ENCODE measurements at regions of chr12 and their contacts with region 1.

Region 1: GRCh38 chr12:15001733-15002382 is 29.0 kb downstream of the PDE6H start:
- DNase-seq: peak in 4 of 5 donors; percentile 23 to 62 (median 56)
- ATAC-seq: peak; percentile 67 to 91 (median 78)
- H3K4me3 ChIP-seq: no peak overlapping the region
- H3K27ac ChIP-seq: peak overlapping the region in 5 of 12 donors; percentile 12 to 76 (median 15)
- H3K4me1 ChIP-seq: peaks cover 0 to 13% (median 7%) of the 10 kb centered on the region in 12 donors
- H3K27me3 ChIP-seq: peaks cover 0 to 7% (median 0%) of the 10 kb centered on the region in 9 donors
- CTCF ChIP-seq: peak in 1 of 12 donors; percentile 12
- POLR2A ChIP-seq: no peak

Region 2: DNA sequence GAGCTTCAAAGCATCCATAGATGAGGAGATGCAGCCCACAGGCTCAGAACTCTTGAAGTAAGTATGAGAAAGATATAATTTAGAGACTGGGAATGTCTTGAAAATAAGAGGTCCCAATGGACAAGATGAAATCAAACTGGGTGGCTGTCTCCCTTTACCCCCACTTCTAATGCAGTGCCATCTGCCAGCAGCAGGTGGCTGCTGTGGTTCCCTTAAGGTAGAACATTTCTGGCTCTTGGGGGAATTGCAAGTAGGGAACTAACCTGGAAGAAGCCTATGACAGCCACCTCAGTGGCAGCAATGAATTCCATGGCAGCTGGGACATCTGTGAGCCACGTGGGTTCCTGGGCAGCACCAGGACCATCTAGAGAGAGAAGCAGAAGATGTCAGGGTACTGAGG is 64.2 kb before region 1 on chr12:
- intact Hi-C with region 1: no loop called
- DNase-seq: no peak
- ATAC-seq: no peak
- H3K4me3 ChIP-seq: no peak overlapping the region
- H3K27ac ChIP-seq: no peak overlapping the region
- H3K4me1 ChIP-seq: peaks cover 0 to 4% (median 0%) of the 10 kb centered on the region in 12 donors
- H3K27me3 ChIP-seq: no peaks in the 10 kb centered on the region
- CTCF ChIP-seq: no peak
- POLR2A ChIP-seq: no peak

Region 3: DNA sequence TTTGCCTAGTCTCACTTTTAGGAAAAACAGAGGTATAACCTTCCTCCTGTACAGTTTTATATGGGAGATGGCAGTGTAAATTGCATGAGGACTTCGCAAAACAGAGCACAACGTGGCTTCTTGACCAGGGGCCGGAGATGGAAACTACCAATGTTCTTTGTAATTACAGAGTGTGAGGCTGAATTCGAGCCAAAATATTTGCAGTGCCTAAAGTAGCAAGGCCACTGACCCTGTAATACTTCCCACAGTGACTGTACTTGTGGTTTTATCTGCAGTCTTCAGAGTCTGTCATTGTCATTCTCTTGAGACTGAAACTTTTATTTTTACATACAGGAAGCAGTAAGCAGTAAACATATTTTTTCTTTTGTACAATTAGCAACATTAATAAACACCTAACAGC is 120.5 kb after region 1 on chr12:
- intact Hi-C with region 1: loop called in 1 of 10 experiments (anchors 10 kb)
- DNase-seq: peak in 1 of 5 donors; percentile 33
- ATAC-seq: peak; percentile 49 to 69 (median 60)
- H3K4me3 ChIP-seq: no peak overlapping the region
- H3K27ac ChIP-seq: peak overlapping the region in 5 of 12 donors; percentile 1 to 33 (median 23)
- H3K4me1 ChIP-seq: peaks cover 0 to 8% (median 0%) of the 10 kb centered on the region in 12 donors
- H3K27me3 ChIP-seq: no peaks in the 10 kb centered on the region
- CTCF ChIP-seq: no peak
- POLR2A ChIP-seq: no peak

Region 4: GRCh38 chr12:15216036-15216794 is 214.4 kb after region 1 on chr12:
- intact Hi-C with region 1: loop called in 7 of 10 experiments (anchors 5 to 10 kb)
- DNase-seq: no peak
- ATAC-seq: no peak
- H3K4me3 ChIP-seq: no peak overlapping the region
- H3K27ac ChIP-seq: peak overlapping the region in 6 of 12 donors; percentile 14 to 85 (median 60)
- H3K4me1 ChIP-seq: peaks cover 0 to 17% (median 3%) of the 10 kb centered on the region in 12 donors
- H3K27me3 ChIP-seq: peaks cover 0 to 13% (median 0%) of the 10 kb centered on the region in 9 donors
- CTCF ChIP-seq: no peak
- POLR2A ChIP-seq: no peak

Region 5: DNA sequence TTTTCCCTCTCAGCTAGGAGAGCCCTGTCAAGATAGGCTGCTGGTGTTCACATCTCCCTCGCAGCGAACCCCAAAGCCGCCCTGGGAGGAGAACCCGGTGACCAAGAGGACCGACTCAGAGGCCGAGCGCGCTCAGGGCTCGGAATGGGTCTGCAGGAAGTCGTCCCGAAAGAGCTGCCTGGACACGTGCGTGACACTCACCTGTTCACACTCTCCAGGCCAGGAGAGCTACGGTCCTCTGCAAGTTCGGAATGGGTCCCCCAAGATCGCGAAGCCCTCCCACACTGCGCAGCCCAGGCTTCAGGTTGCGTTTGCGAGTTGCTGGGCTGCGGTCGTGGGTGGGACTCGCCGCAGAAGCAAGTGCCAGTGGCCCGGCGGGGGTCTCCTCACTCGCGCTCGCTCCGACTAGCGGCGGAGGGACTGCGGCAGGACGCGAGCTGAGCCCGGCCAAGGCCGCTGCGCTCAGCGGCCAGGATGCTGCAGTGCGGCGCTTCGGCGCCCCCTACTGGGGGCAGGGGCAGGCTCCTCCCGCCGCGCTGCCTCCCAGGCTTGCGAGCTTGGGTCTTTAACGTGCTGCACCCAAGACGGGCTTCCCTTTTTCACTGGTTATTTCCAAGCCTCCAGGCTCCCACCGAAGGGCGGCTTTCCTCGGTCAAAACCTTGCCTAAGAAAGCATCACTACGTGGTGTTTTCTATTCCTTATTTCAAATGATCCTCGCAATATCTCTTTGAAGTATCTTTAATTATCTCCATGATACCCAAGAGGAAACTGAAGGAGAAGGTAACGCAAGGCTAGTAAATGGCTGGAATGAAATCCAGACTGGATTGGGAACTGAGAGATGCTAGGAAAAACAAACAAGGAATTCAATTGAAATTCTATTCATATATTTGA is 219.4 kb after region 1 on chr12 and contains the start of gene RERG:
- intact Hi-C with region 1: loop called in 7 of 10 experiments (anchors 5 to 10 kb)
- DNase-seq: peak; percentile 78 to 92 (median 84)
- ATAC-seq: peak; percentile 84 to 100 (median 98)
- H3K4me3 ChIP-seq: peak within 1 kb of the TSS; percentile 44 to 75 (median 60)
- H3K27ac ChIP-seq: peak within 1 kb of the TSS; percentile 7 to 86 (median 80)
- H3K4me1 ChIP-seq: peaks cover 0 to 12% (median 5%) of the 10 kb centered on the region in 12 donors
- H3K27me3 ChIP-seq: peaks cover 0 to 35% (median 3%) of the 10 kb centered on the region in 9 donors
- CTCF ChIP-seq: peak; percentile 91 to 99 (median 98)
- POLR2A ChIP-seq: no peak
- total RNA-seq, gene RERG: 2.9 to 17.7 (median 4.2) TPM

Region 6: GRCh38 chr12:15268927-15269552 is 267.2 kb after region 1 on chr12:
- intact Hi-C with region 1: loop called in 2 of 10 experiments (anchors 10 kb)
- DNase-seq: peak in 3 of 5 donors; percentile 15 to 28 (median 27)
- ATAC-seq: peak in 2 of 4 donors; percentile 46 to 61
- H3K4me3 ChIP-seq: no peak overlapping the region
- H3K27ac ChIP-seq: no peak overlapping the region
- H3K4me1 ChIP-seq: no peaks in the 10 kb centered on the region
- H3K27me3 ChIP-seq: peaks cover 0 to 8% (median 0%) of the 10 kb centered on the region in 9 donors
- CTCF ChIP-seq: peak; percentile 74 to 94 (median 82)
- POLR2A ChIP-seq: no peak

Measured in heart left ventricle (tissue), 16 donors.